ENCODE measurements at regions of chr11 and their contacts with region 1.

Region 1: GRCh38 chr11:131841028-131841427 is 470.6 kb downstream of the NTM start:
- DNase-seq: no peak
- ATAC-seq: no peak
- H3K4me3 Mint-ChIP-seq: no peak overlapping the region
- H3K27ac Mint-ChIP-seq: no peak overlapping the region
- H3K4me1 Mint-ChIP-seq: peaks cover 44% of the 10 kb centered on the region
- H3K27me3 Mint-ChIP-seq: no peaks in the 10 kb centered on the region; the same call in none of the 2 replicates
- CTCF ChIP-seq: no peak

Region 2: GRCh38 chr11:131859538-131860210 is 18.6 kb after region 1 on chr11:
- CTCF ChIA-PET with region 1: interaction called, 12 read pairs
- POLR2A ChIA-PET with region 1: no interaction called
- DNase-seq: no peak
- ATAC-seq: no peak
- H3K4me3 Mint-ChIP-seq: no peak overlapping the region
- H3K27ac Mint-ChIP-seq: no peak overlapping the region
- H3K4me1 Mint-ChIP-seq: peaks cover 25% of the 10 kb centered on the region
- H3K27me3 Mint-ChIP-seq: no peaks in the 10 kb centered on the region
- CTCF ChIP-seq: no peak

Measured in WTC11 (cell line).